ENCODE measurements at regions of chrX and their contacts with region 1.

Region 1: DNA sequence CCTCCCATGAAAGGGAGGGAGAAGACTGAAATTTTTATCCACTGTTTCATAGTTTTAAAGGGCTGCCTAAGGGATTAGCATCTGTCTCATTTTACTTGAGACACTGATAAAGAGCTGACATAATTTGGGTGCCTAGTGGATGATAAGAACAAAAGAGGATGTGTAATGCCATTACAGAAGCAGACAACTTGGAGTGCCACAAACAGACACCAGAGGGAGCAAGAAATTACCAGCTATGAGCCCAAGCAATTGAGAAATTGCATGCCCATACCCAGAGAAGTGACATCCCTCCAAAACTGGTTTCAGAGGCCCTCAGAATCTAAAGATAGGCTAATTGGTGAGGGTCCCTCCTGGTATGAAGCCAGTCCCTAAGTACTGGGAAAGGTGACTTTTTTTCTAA is 38.5 kb upstream of the POU3F4 start:
- DNase-seq: peak in 1 of 2 experiments; percentile 46
- H3K4me3 ChIP-seq: no peak overlapping the region
- H3K27ac ChIP-seq: no peak overlapping the region
- H3K4me1 ChIP-seq: no peaks in the 10 kb centered on the region
- H3K27me3 ChIP-seq: no peaks in the 10 kb centered on the region
- CTCF ChIP-seq: peak in 2 of 3 experiments; percentile 39 to 47; a peak in 3 of 4 replicates
- EP300 ChIP-seq: no peak
- POLR2A ChIP-seq: no peak
- RAD21 ChIP-seq: peak; percentile 53 to 62

Region 2: GRCh38 chrX:83419030-83419792 is 50.3 kb before region 1 on chrX:
- CTCF ChIA-PET with region 1: no interaction called
- POLR2A ChIA-PET with region 1: no interaction called
- DNase-seq: no peak
- H3K4me3 ChIP-seq: no peak overlapping the region
- H3K27ac ChIP-seq: no peak overlapping the region
- H3K4me1 ChIP-seq: no peaks in the 10 kb centered on the region
- H3K27me3 ChIP-seq: no peaks in the 10 kb centered on the region
- CTCF ChIP-seq: no peak
- EP300 ChIP-seq: no peak
- POLR2A ChIP-seq: no peak
- RAD21 ChIP-seq: no peak

Region 3: GRCh38 chrX:83630662-83631061 is 161.1 kb after region 1 on chrX:
- CTCF ChIA-PET with region 1: interaction called, 14 read pairs
- POLR2A ChIA-PET with region 1: no interaction called
- DNase-seq: no peak
- H3K4me3 ChIP-seq: no peak overlapping the region
- H3K27ac ChIP-seq: no peak overlapping the region
- H3K4me1 ChIP-seq: no peaks in the 10 kb centered on the region
- H3K27me3 ChIP-seq: no peaks in the 10 kb centered on the region
- CTCF ChIP-seq: no peak
- EP300 ChIP-seq: no peak
- POLR2A ChIP-seq: no peak
- RAD21 ChIP-seq: no peak